ENCODE measurements at regions of chr1 and their contacts with region 1.

Region 1: GRCh38 chr1:76254104-76255030 is 179.8 kb downstream of the ST6GALNAC3 start:
- DNase-seq: no peak
- H3K4me3 Mint-ChIP-seq: no peak overlapping the region
- H3K27ac Mint-ChIP-seq: peak overlapping the region; percentile 32
- H3K4me1 Mint-ChIP-seq: peaks cover 49% of the 10 kb centered on the region
- H3K27me3 Mint-ChIP-seq: no peaks in the 10 kb centered on the region

Region 2: DNA sequence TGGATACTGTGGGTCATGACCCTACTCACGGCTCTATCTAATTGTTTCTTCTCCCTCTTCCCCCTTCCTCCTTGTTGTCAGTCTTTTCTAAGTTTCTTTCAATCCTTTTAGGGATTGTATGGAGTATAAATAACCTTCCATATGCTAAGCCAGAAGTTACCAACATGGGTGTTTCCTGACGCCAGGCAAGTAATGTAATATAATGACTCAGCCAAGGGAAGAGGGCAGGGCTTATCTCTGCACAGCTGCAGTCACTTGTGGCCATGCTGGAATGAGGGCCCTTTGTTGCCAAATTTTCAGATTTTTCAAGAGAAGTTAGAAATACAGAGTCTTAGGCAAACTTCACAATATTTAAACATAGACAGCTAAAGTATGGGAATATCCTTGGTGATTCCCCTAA is 14.8 kb after region 1 on chr1:
- intact Hi-C with region 1: loop called (anchors 1 kb)
- DNase-seq: no peak
- H3K4me3 Mint-ChIP-seq: peak overlapping the region; percentile 48
- H3K27ac Mint-ChIP-seq: peak overlapping the region; percentile 77
- H3K4me1 Mint-ChIP-seq: peaks cover 71% of the 10 kb centered on the region
- H3K27me3 Mint-ChIP-seq: no peaks in the 10 kb centered on the region

Region 3: GRCh38 chr1:76294482-76295194 is 40.3 kb after region 1 on chr1:
- intact Hi-C with region 1: loop called (anchors 2 kb)
- DNase-seq: no peak
- H3K4me3 Mint-ChIP-seq: peak overlapping the region; percentile 56
- H3K27ac Mint-ChIP-seq: peak overlapping the region; percentile 83
- H3K4me1 Mint-ChIP-seq: peaks cover 60% of the 10 kb centered on the region
- H3K27me3 Mint-ChIP-seq: no peaks in the 10 kb centered on the region

Region 4: GRCh38 chr1:76494807-76495206 is 240.4 kb after region 1 on chr1:
- intact Hi-C with region 1: loop called (anchors 10 kb)
- DNase-seq: peak; percentile 1
- H3K4me3 Mint-ChIP-seq: peak overlapping the region; percentile 20
- H3K27ac Mint-ChIP-seq: peak overlapping the region; percentile 60
- H3K4me1 Mint-ChIP-seq: peaks cover 35% of the 10 kb centered on the region
- H3K27me3 Mint-ChIP-seq: peaks cover 1% of the 10 kb centered on the region

Measured in activated T-helper 1 cell treated with anti-CD3 and anti-CD28 coated beads, Interleukin-12 subunit alpha, Interleukin-12 subunit beta, Interleukin-2, Interleukin-4 antibody, amounts not matched to agents 30 ng/mL and 10 ng/mL and 1 ng/mL, durations not matched to agents 14 hours and 24 hours and 36 hours (primary cell).